ENCODE measurements at regions of chr6 and their contacts with region 1.

Region 1: GRCh38 chr6:159104163-159104925 is 59.6 kb upstream of the TAGAP start:
- DNase-seq: peak; percentile 65 to 90 (median 78)
- ATAC-seq: peak; percentile 49
- H3K4me3 ChIP-seq: no peak overlapping the region
- H3K4me3 Mint-ChIP-seq: peak overlapping the region; percentile 50
- H3K27ac ChIP-seq: peak overlapping the region in 1 of 2 experiments; percentile 50
- H3K27ac Mint-ChIP-seq: peak overlapping the region; percentile 84
- H3K4me1 ChIP-seq: peaks cover 64% of the 10 kb centered on the region
- H3K4me1 Mint-ChIP-seq: peaks cover 75% of the 10 kb centered on the region
- H3K27me3 ChIP-seq: no peaks in the 10 kb centered on the region
- H3K27me3 Mint-ChIP-seq: no peaks in the 10 kb centered on the region
- CTCF ChIP-seq: peak; percentile 94

Region 2: DNA sequence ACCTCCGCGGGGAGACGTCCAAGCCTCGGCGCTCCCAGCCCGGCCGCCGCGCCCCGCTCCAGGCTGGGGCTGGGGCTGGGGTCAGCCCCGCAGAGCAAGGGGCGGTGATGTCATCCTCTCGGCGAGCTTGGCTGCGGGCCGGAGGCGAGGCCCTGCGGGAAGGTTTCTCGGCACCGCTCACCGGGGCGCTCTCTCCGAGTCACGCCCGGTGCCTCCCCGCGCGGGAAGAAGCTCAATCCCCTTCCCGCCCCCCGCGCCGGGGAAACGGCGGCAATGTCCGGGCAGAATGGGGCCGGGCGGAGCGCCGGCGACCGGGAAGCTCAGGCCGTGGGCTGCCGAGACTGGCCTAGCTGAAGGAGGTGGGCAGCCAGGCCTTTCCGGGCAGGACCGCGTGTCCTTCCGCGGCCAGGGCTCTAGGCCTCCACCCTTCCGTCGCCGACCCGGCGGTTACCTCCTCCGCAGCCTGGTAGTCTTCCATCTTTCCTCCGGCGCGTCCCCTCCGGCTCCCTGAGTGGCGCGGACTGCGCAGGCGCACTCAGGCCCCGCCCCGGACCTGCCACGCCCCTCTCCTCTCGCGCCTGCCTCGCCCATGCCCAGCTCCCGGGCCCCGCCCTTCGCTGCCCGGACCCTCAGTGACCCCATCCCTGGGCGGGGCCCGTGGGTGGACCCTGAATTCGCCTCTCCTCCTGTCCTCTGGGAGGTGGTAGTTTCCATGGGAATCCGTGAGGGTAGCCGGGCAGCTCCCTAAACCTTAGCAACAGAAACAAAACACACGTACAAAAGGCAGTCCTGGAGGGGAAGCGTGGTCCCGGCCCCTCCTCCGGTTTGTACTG is 459.9 kb before region 1 on chr6 and contains the start of gene DYNLT1:
- CTCF ChIA-PET with region 1: interaction called, 3 read pairs
- POLR2A ChIA-PET with region 1: no interaction called
- intact Hi-C with region 1: loop called in 1 of 2 experiments (anchors 5 kb)
- DNase-seq: peak; percentile 77 to 92 (median 85)
- ATAC-seq: peak; percentile 67
- H3K4me3 ChIP-seq: peak within 1 kb of the TSS; percentile 77 to 84
- H3K4me3 Mint-ChIP-seq: peak within 1 kb of the TSS; percentile 97
- H3K27ac ChIP-seq: peak within 1 kb of the TSS; percentile 93 to 94
- H3K27ac Mint-ChIP-seq: peak within 1 kb of the TSS; percentile 96
- H3K4me1 ChIP-seq: peaks cover 49% of the 10 kb centered on the region
- H3K4me1 Mint-ChIP-seq: peaks cover 63% of the 10 kb centered on the region
- H3K27me3 ChIP-seq: no peaks in the 10 kb centered on the region
- H3K27me3 Mint-ChIP-seq: no peaks in the 10 kb centered on the region
- CTCF ChIP-seq: no peak
- total RNA-seq, gene DYNLT1: 109 TPM

Region 3: DNA sequence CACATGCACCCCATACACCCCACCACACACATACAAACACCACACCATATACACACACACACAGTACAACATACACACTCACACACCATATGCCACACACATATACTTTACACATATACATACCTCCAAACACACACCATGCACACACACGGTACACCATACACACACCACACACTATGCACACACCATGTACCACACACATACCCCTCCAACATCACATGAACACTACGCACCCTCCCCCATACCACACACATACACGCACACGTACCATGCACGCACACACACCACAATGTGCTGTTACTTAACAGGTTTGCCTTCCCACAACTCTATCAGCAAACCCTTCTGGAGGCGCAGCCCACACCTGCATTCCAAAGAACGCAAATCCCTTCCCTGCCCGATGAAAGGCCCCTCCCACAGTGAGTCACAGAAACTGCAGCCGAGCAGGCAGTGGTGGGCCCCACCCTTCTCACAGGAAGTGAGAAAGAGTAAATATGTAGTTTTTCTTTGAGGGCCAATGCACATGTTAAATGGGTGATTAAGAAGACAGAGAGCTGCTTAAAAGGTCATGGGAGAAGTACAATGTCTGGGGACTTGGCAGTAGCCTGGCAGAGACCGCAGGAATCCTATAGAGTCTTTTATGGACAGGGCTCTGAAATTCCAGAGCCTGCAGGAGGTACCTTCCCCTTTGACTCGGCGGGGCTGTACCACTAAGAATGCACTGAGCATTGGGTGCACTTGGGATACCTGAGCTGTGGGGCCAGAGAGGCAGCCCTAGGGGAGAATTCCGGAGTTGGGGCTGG is 251.1 kb before region 1 on chr6:
- CTCF ChIA-PET with region 1: no interaction called
- POLR2A ChIA-PET with region 1: no interaction called
- intact Hi-C with region 1: loop called in 1 of 2 experiments (anchors 10 kb)
- DNase-seq: peak; percentile 75 to 95 (median 88)
- ATAC-seq: peak; percentile 74
- H3K4me3 ChIP-seq: peak overlapping the region; percentile 7 to 52
- H3K4me3 Mint-ChIP-seq: no peak overlapping the region
- H3K27ac ChIP-seq: peak overlapping the region; percentile 77 to 98
- H3K27ac Mint-ChIP-seq: no peak overlapping the region
- H3K4me1 ChIP-seq: peaks cover 58% of the 10 kb centered on the region
- H3K4me1 Mint-ChIP-seq: peaks cover 44% of the 10 kb centered on the region
- H3K27me3 ChIP-seq: no peaks in the 10 kb centered on the region
- H3K27me3 Mint-ChIP-seq: no peaks in the 10 kb centered on the region
- CTCF ChIP-seq: no peak

Region 4: DNA sequence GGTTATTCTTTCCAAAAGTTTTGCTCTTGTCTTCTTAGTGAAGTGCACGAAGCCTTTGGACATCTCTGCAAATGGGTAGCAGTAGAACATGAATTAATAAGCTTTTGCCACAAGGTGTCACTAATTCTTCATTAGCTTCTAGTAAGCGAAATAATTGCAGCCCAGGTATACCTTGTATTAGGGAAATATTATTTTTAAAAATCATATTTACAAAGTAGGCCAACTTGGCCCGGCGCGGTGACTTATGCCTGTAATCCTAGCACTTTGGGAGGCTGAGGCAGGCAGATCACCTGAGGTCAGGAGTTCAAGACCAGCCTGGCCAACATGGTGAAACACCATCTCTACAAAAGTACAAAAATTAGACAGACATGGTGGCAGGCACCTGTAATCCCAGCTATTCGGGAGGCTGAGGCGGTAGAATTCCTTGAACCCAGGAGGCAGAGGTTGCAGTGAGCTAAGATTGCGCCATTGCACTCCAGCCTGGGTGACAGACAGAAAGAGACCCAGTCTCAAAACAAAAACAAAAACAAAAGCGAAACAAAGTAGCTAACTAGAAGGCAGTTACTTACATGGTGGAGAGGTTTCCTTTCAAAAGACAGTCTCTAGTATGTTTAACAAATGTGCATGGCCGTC is 95.6 kb before region 1 on chr6:
- CTCF ChIA-PET with region 1: interaction called, 486 read pairs
- POLR2A ChIA-PET with region 1: interaction called, 6 read pairs
- intact Hi-C with region 1: loop called (anchors 1 kb)
- DNase-seq: peak in 3 of 9 experiments; percentile 58 to 78 (median 68)
- ATAC-seq: peak; percentile 78
- H3K4me3 ChIP-seq: peak overlapping the region in 1 of 2 experiments; percentile 32
- H3K4me3 Mint-ChIP-seq: peak overlapping the region; percentile 67
- H3K27ac ChIP-seq: peak overlapping the region in 1 of 2 experiments; percentile 24
- H3K27ac Mint-ChIP-seq: peak overlapping the region; percentile 12
- H3K4me1 ChIP-seq: peaks cover 6% of the 10 kb centered on the region
- H3K4me1 Mint-ChIP-seq: peaks cover 36% of the 10 kb centered on the region
- H3K27me3 ChIP-seq: no peaks in the 10 kb centered on the region
- H3K27me3 Mint-ChIP-seq: no peaks in the 10 kb centered on the region
- CTCF ChIP-seq: peak; percentile 73

Region 5: DNA sequence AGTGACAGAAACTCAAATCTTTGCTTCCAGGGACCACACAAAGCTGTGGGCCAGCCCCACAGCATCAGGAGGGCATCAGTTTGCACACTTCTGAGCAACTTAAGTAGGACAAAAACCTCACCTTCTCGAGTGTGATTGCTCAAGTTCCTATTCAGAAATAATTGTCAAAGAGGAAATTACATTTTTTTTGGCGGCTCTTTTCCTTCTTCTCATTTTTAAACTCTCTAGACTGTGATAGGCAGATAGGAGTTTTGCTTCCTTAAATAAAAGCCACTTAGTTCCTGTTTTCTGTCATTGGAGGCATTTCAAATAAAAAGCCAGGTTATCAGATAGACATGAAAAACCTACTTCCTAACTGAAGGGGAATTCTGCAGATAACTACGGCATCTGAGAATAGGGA is 48.3 kb before region 1 on chr6:
- CTCF ChIA-PET with region 1: interaction called, 28 read pairs
- POLR2A ChIA-PET with region 1: interaction called, 5 read pairs
- intact Hi-C with region 1: no loop called
- DNase-seq: no peak
- ATAC-seq: no peak
- H3K4me3 ChIP-seq: no peak overlapping the region
- H3K4me3 Mint-ChIP-seq: peak overlapping the region; percentile 5
- H3K27ac ChIP-seq: no peak overlapping the region
- H3K27ac Mint-ChIP-seq: peak overlapping the region; percentile 82
- H3K4me1 ChIP-seq: peaks cover 40% of the 10 kb centered on the region
- H3K4me1 Mint-ChIP-seq: peaks cover 66% of the 10 kb centered on the region
- H3K27me3 ChIP-seq: no peaks in the 10 kb centered on the region
- H3K27me3 Mint-ChIP-seq: no peaks in the 10 kb centered on the region
- CTCF ChIP-seq: no peak

Region 6: GRCh38 chr6:159080217-159080976 is 23.9 kb before region 1 on chr6:
- CTCF ChIA-PET with region 1: interaction called, 16 read pairs
- POLR2A ChIA-PET with region 1: interaction called, 5 read pairs
- intact Hi-C with region 1: loop called in 1 of 2 experiments (anchors 2 kb)
- DNase-seq: peak in 1 of 9 experiments; percentile 52
- ATAC-seq: peak; percentile 65
- H3K4me3 ChIP-seq: no peak overlapping the region
- H3K4me3 Mint-ChIP-seq: peak overlapping the region; percentile 37
- H3K27ac ChIP-seq: no peak overlapping the region
- H3K27ac Mint-ChIP-seq: peak overlapping the region; percentile 72
- H3K4me1 ChIP-seq: peaks cover 36% of the 10 kb centered on the region
- H3K4me1 Mint-ChIP-seq: peaks cover 46% of the 10 kb centered on the region
- H3K27me3 ChIP-seq: no peaks in the 10 kb centered on the region
- H3K27me3 Mint-ChIP-seq: no peaks in the 10 kb centered on the region
- CTCF ChIP-seq: no peak